HCT116 (cell line): ENCODE measurements at regions of chr12 and their contacts with region 1.

Region 1: GRCh38 chr12:92844151-92844763 is 84.8 kb downstream of the EEA1 start:
- DNase-seq: no peak
- ATAC-seq: no peak
- H3K4me3 ChIP-seq: no peak overlapping the region
- H3K27ac ChIP-seq: no peak overlapping the region
- H3K4me1 ChIP-seq: no peaks in the 10 kb centered on the region
- H3K27me3 ChIP-seq: no peaks in the 10 kb centered on the region
- CTCF ChIP-seq: no peak
- POLR2A ChIP-seq: no peak
- RAD21 ChIP-seq: no peak

Region 2: DNA sequence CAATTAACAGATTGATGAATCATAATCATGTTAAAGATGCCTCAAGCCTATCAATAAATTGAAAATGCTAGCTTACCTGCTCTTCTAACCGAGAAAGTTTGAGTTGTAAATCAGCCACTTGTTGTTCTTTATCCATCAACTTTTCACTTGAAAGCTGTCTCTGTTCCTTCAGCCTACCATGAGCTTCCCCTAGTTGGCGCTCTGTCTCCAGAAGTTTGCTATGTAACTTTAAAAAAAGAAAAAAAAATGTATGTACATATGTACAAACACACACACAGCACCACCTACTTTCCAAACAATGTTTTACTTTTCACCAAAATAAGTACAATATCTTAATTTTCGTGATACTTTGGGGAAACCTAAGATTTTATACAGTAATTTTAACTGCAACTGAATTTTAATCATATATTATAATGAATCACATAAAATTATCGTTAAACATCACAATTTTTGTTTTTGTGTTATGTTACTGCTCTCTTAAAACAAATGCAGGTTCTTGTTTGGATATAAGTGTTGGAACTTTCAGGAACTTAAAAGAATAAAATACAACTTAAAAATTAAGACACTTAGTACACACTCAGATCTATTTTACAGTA is 16.3 kb before region 1 on chr12:
- CTCF ChIA-PET with region 1: interaction called, 10 read pairs
- POLR2A ChIA-PET with region 1: no interaction called
- RAD21 ChIA-PET with region 1: no interaction called
- intact Hi-C with region 1: no loop called
- DNase-seq: peak; percentile 28
- ATAC-seq: peak; percentile 70
- H3K4me3 ChIP-seq: no peak overlapping the region
- H3K27ac ChIP-seq: no peak overlapping the region
- H3K4me1 ChIP-seq: no peaks in the 10 kb centered on the region
- H3K27me3 ChIP-seq: no peaks in the 10 kb centered on the region
- CTCF ChIP-seq: peak; percentile 77 to 91 (median 87); a peak in 5 of 6 replicates
- POLR2A ChIP-seq: no peak
- RAD21 ChIP-seq: peak; percentile 72